ENCODE measurements at regions of chr22 and their contacts with region 1.

Region 1: GRCh38 chr22:29625090-29625825 is 21.8 kb downstream of the NF2 start:
- DNase-seq: peak in 6 of 9 experiments; percentile 11 to 66 (median 29)
- ATAC-seq: no peak
- H3K4me3 ChIP-seq: no peak overlapping the region
- H3K4me3 Mint-ChIP-seq: no peak overlapping the region
- H3K27ac ChIP-seq: no peak overlapping the region
- H3K27ac Mint-ChIP-seq: no peak overlapping the region
- H3K4me1 ChIP-seq: peaks cover 25% of the 10 kb centered on the region
- H3K4me1 Mint-ChIP-seq: peaks cover 64% of the 10 kb centered on the region
- H3K27me3 ChIP-seq: no peaks in the 10 kb centered on the region
- H3K27me3 Mint-ChIP-seq: no peaks in the 10 kb centered on the region
- CTCF ChIP-seq: peak; percentile 86

Region 2: GRCh38 chr22:29553351-29554224 is 71.7 kb before region 1 on chr22 and contains the start of gene THOC5:
- CTCF ChIA-PET with region 1: no interaction called
- POLR2A ChIA-PET with region 1: no interaction called
- intact Hi-C with region 1: no loop called
- DNase-seq: peak; percentile 73 to 94 (median 91)
- ATAC-seq: peak; percentile 95
- H3K4me3 ChIP-seq: peak within 1 kb of the TSS; percentile 57 to 94
- H3K4me3 Mint-ChIP-seq: peak within 1 kb of the TSS; percentile 88
- H3K27ac ChIP-seq: peak within 1 kb of the TSS; percentile 61 to 66
- H3K27ac Mint-ChIP-seq: peak within 1 kb of the TSS; percentile 96
- H3K4me1 ChIP-seq: peaks cover 7% of the 10 kb centered on the region
- H3K4me1 Mint-ChIP-seq: peaks cover 27% of the 10 kb centered on the region
- H3K27me3 ChIP-seq: no peaks in the 10 kb centered on the region
- H3K27me3 Mint-ChIP-seq: no peaks in the 10 kb centered on the region
- CTCF ChIP-seq: no peak
- total RNA-seq, gene THOC5: 33.5 to 35.0 TPM

Region 3: DNA sequence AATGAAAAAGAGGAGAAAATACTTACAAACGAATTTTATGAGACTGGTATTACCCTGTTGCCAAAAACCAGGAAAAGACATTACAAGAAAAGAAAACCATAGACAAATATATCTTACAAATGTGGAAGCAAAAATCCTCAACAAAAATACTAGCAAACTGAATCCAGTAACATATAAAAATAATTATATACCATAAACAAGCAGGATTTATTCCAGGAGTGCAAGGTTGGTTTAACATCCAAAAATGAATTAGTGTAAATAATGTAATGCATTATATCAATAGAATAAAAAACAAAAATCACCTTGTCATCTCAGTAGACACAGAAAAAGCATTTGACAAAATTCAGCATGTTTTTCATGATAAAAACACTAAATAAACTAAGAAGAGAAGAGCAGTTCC is 14.5 kb before region 1 on chr22:
- CTCF ChIA-PET with region 1: interaction called, 24 read pairs
- POLR2A ChIA-PET with region 1: no interaction called
- intact Hi-C with region 1: no loop called
- DNase-seq: no peak
- ATAC-seq: no peak
- H3K4me3 ChIP-seq: no peak overlapping the region
- H3K4me3 Mint-ChIP-seq: no peak overlapping the region
- H3K27ac ChIP-seq: no peak overlapping the region
- H3K27ac Mint-ChIP-seq: no peak overlapping the region
- H3K4me1 ChIP-seq: peaks cover 8% of the 10 kb centered on the region
- H3K4me1 Mint-ChIP-seq: peaks cover 17% of the 10 kb centered on the region
- H3K27me3 ChIP-seq: no peaks in the 10 kb centered on the region
- H3K27me3 Mint-ChIP-seq: no peaks in the 10 kb centered on the region
- CTCF ChIP-seq: no peak

Region 4: GRCh38 chr22:29635734-29636357 is 10.6 kb after region 1 on chr22:
- CTCF ChIA-PET with region 1: interaction called, 34 read pairs
- POLR2A ChIA-PET with region 1: no interaction called
- intact Hi-C with region 1: no loop called
- DNase-seq: peak in 2 of 9 experiments; percentile 34 to 51
- ATAC-seq: no peak
- H3K4me3 ChIP-seq: no peak overlapping the region
- H3K4me3 Mint-ChIP-seq: no peak overlapping the region
- H3K27ac ChIP-seq: no peak overlapping the region
- H3K27ac Mint-ChIP-seq: no peak overlapping the region
- H3K4me1 ChIP-seq: no peaks in the 10 kb centered on the region
- H3K4me1 Mint-ChIP-seq: peaks cover 29% of the 10 kb centered on the region
- H3K27me3 ChIP-seq: no peaks in the 10 kb centered on the region
- H3K27me3 Mint-ChIP-seq: no peaks in the 10 kb centered on the region
- CTCF ChIP-seq: peak; percentile 47

Region 5: DNA sequence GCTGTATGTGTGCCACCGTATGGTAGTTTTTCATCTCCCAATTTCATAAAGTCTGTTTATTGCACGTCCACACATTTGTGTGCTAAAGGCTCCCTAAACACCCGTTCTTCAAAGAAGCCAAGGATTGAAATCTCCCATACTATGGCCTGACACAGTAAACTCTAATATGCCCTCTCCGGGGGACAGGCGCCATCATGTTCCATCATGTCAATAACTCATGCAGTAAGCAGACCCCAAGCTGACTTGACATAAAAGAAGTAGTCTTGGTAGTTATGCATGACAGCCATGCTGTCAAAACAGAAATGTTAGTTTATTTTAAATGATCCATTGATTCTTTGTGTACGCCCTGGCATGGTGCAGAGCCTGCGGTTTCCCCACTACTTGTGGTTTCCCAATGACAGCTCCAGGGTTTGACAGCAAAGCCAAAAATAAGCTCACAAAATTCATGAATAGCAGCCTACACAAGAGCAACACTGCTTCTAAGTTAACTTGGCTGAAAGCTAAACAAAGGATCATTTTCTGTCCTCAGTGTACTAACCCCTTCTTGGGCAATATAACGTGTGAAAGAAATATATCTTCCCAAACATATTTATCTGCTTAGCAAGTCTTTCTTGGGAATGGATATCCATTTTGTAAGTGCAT is 38.0 kb after region 1 on chr22:
- CTCF ChIA-PET with region 1: interaction called, 13 read pairs
- POLR2A ChIA-PET with region 1: no interaction called
- intact Hi-C with region 1: no loop called
- DNase-seq: no peak
- ATAC-seq: no peak
- H3K4me3 ChIP-seq: no peak overlapping the region
- H3K4me3 Mint-ChIP-seq: no peak overlapping the region
- H3K27ac ChIP-seq: no peak overlapping the region
- H3K27ac Mint-ChIP-seq: no peak overlapping the region
- H3K4me1 ChIP-seq: no peaks in the 10 kb centered on the region
- H3K4me1 Mint-ChIP-seq: no peaks in the 10 kb centered on the region
- H3K27me3 ChIP-seq: no peaks in the 10 kb centered on the region
- H3K27me3 Mint-ChIP-seq: no peaks in the 10 kb centered on the region
- CTCF ChIP-seq: no peak

Measured in CD8-positive, alpha-beta T cell (primary cell).